Dorsolateral prefrontal cortex (tissue), 120 donors: ENCODE measurements at regions of chr4 and their contacts with region 1.

Region 1: GRCh38 chr4:76949276-76950051 is at the start of gene SEPTIN11:
- DNase-seq: peak; percentile 82 to 93 (median 91)
- H3K4me3 ChIP-seq: peak within 1 kb of the TSS; percentile 64 to 96 (median 86)
- H3K27ac ChIP-seq: peak within 1 kb of the TSS; percentile 74 to 99 (median 93)
- H3K27me3 ChIP-seq: no peaks in the 10 kb centered on the region
- CTCF ChIP-seq: peak in 13 of 56 donors; percentile 3 to 46 (median 10)
- total RNA-seq, gene SEPTIN11: 109 to 284 (median 200) TPM

Region 2: DNA sequence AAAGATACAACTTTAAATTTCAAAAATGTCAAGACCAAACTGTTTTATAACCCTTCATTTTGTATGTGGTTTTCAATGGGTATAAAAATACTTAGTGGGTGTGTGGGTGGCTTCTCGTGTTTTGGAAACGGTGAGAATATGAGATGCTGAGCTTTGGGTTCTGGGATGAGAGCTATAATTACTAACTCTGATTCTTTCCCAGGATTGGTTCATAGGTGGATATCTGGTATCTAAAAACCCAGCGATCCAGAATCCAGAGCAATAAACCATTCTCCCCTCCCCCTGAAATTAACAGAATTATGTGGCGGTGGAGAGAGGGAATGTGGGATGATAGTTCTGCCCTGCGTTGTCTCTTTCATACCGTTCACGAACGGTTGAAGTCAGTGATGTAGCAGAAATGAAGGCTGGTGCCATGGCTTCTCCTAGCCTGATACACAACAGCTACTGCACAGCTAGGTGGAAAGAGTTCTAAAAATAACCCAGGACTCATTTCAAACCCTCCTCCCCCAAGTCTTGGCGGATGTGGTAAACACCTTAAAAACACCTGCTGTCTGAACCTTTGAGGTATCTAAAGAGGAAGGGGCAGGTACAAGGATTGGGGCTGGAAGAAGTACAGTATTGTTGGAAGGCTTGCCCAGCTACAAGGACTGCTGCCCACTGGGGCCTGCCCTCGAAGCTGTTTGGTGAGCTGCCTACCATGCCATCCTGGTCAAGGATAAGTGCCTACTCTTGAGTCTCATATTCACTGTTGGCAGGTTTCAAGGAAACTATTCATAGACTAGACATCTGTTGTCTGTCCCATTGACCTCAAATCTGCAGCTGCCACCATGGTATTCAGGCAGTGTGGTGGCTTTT is 44.5 kb after region 1 on chr4:
- intact Hi-C with region 1: loop called in 1 of 2 experiments (anchors 5 kb)
- DNase-seq: peak in 1 of 10 donors; percentile 37
- H3K4me3 ChIP-seq: no peak overlapping the region
- H3K27ac ChIP-seq: peak overlapping the region in 42 of 59 donors; percentile 4 to 79 (median 41)
- H3K27me3 ChIP-seq: no peaks in the 10 kb centered on the region
- CTCF ChIP-seq: no peak

Region 3: GRCh38 chr4:77044461-77045150 is 95.1 kb after region 1 on chr4:
- intact Hi-C with region 1: loop called (anchors 5 to 10 kb)
- DNase-seq: no peak
- H3K4me3 ChIP-seq: no peak overlapping the region
- H3K27ac ChIP-seq: peak overlapping the region in 6 of 59 donors; percentile 4 to 53 (median 28)
- H3K27me3 ChIP-seq: no peaks in the 10 kb centered on the region
- CTCF ChIP-seq: peak; percentile 43 to 80 (median 64)

Region 4: DNA sequence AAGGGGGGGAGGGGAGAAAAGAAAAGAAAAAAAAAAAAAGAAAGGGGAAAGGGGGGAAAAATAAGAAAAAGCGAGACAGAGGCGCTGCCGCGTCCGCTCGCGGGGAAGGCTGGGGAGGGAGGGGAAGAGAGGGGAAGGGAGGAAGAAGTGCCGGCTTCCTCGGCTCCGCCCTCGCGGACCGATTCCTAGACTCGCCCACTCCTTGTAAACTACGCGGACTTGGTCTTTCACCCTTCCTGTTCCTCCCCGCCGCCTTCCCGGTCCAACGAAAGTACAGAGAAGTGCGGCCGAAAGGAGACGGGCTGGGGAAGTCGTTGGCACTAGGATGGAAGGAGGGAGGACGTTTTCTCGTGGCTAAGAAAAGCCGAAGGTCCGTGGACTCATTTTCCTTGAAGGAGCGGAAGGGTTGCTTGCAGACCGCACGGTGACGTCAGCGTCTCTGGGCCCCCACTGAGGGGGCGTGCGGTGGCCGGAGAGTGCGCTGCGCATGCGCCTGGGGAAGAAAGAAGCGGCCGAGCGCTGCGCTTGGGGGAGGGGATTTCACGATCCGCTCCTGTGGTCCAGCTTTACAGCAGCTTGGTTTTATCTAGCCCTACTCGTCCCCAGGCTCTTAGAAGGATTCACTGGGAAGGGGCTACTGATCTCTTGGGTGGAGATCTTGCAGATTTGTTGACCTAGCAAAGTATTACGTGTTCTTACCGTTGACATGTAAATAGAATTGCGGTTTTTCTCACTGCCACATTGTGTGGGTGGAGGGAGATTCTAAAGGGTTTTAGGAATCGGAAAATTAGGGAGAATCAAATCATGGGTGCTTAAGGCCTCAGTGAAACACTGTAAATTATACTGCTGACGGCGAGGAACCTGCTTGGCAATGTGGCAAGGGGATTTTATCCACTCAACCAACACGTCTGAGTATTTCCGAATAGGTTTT is 126.7 kb after region 1 on chr4 and contains the start of gene CCNI:
- intact Hi-C with region 1: loop called (anchors 1 to 2 kb)
- DNase-seq: peak; percentile 85 to 94 (median 93)
- H3K4me3 ChIP-seq: peak within 1 kb of the TSS; percentile 46 to 97 (median 83)
- H3K27ac ChIP-seq: peak within 1 kb of the TSS; percentile 92 to 100 (median 99)
- H3K27me3 ChIP-seq: no peaks in the 10 kb centered on the region
- CTCF ChIP-seq: peak in 16 of 56 donors; percentile 6 to 41 (median 28)
- total RNA-seq, gene CCNI: 250 to 549 (median 371) TPM